HCT116 (cell line): ENCODE measurements at regions of chr9 and their contacts with region 1.

Region 1: GRCh38 chr9:69218166-69218565 is 44.1 kb downstream of the TJP2 start:
- DNase-seq: no peak
- ATAC-seq: no peak
- H3K4me3 ChIP-seq: no peak overlapping the region
- H3K27ac ChIP-seq: no peak overlapping the region
- H3K4me1 ChIP-seq: no peaks in the 10 kb centered on the region
- H3K27me3 ChIP-seq: no peaks in the 10 kb centered on the region
- CTCF ChIP-seq: no peak
- POLR2A ChIP-seq: no peak
- RAD21 ChIP-seq: no peak

Region 2: DNA sequence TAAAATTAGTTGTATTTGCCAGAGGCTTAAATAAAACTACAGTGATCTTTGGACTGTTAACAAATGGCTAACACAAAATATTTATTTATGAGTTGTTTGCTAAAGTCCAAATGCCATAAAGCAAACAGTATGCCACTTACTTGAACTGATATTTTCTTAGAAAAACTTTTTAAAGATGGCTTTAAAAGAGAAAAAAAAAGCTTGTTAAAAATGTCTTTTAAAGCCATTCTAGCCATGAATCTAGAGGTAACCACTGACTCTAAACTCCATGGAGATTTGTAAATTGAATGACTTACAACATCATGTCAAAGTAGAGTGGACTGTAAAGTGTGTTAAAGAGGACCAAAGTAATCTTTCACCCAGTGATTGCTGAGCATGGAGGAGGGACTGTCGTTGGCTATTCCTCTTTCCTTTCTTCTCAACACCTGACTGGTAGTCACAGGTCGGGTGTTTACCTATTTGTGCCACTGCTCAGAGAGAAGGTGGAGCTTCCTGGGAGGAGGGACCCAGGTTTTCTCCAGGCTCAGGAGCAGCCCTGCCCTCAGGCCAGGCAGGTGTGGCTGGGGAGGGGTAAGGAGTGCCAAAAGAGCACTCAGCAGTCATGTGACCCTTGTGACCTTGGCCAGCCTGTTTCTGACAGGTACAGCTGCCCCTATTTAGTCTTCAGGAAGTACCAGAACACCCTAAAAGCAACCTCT is 113.2 kb before region 1 on chr9:
- CTCF ChIA-PET with region 1: no interaction called
- POLR2A ChIA-PET with region 1: no interaction called
- RAD21 ChIA-PET with region 1: no interaction called
- intact Hi-C with region 1: no loop called
- DNase-seq: peak; percentile 42
- ATAC-seq: peak; percentile 99
- H3K4me3 ChIP-seq: no peak overlapping the region
- H3K27ac ChIP-seq: 0 out of 2 replicates have a peak overlapping the region, but pooled peaks have one; percentile 29
- H3K4me1 ChIP-seq: peaks cover 11 to 20% of the 10 kb centered on the region in 2 experiments
- H3K27me3 ChIP-seq: no peaks in the 10 kb centered on the region
- CTCF ChIP-seq: no peak
- POLR2A ChIP-seq: no peak
- RAD21 ChIP-seq: no peak

Region 3: GRCh38 chr9:69155341-69156030 is 62.7 kb before region 1 on chr9:
- CTCF ChIA-PET with region 1: no interaction called
- POLR2A ChIA-PET with region 1: no interaction called
- RAD21 ChIA-PET with region 1: no interaction called
- intact Hi-C with region 1: no loop called
- DNase-seq: no peak
- ATAC-seq: no peak
- H3K4me3 ChIP-seq: no peak overlapping the region
- H3K27ac ChIP-seq: no peak overlapping the region
- H3K4me1 ChIP-seq: 0 out of 4 replicates have a peak, but pooled peaks cover 0 to 2% of the 10 kb centered on the region in 2 experiments
- H3K27me3 ChIP-seq: no peaks in the 10 kb centered on the region
- CTCF ChIP-seq: no peak
- POLR2A ChIP-seq: no peak
- RAD21 ChIP-seq: no peak

Region 4: GRCh38 chr9:69174616-69175463 is 43.3 kb before region 1 on chr9:
- CTCF ChIA-PET with region 1: no interaction called
- POLR2A ChIA-PET with region 1: no interaction called
- RAD21 ChIA-PET with region 1: no interaction called
- intact Hi-C with region 1: no loop called
- DNase-seq: no peak
- ATAC-seq: no peak
- H3K4me3 ChIP-seq: no peak overlapping the region
- H3K27ac ChIP-seq: no peak overlapping the region
- H3K4me1 ChIP-seq: peaks cover 31 to 44% of the 10 kb centered on the region in 2 experiments
- H3K27me3 ChIP-seq: no peaks in the 10 kb centered on the region
- CTCF ChIP-seq: no peak
- POLR2A ChIP-seq: no peak
- RAD21 ChIP-seq: no peak

Region 5: GRCh38 chr9:69204849-69205248 is 13.3 kb before region 1 on chr9:
- CTCF ChIA-PET with region 1: interaction called, 7 read pairs
- POLR2A ChIA-PET with region 1: no interaction called
- RAD21 ChIA-PET with region 1: no interaction called
- intact Hi-C with region 1: loop called (anchors 2 kb)
- DNase-seq: no peak
- ATAC-seq: no peak
- H3K4me3 ChIP-seq: no peak overlapping the region
- H3K27ac ChIP-seq: no peak overlapping the region
- H3K4me1 ChIP-seq: peaks cover 3 to 7% of the 10 kb centered on the region in 2 experiments; a peak in 3 of 4 replicates
- H3K27me3 ChIP-seq: no peaks in the 10 kb centered on the region
- CTCF ChIP-seq: no peak
- POLR2A ChIP-seq: no peak
- RAD21 ChIP-seq: no peak